H1 (cell line): ENCODE measurements at regions of chr19 and their contacts with region 1.

Region 1: DNA sequence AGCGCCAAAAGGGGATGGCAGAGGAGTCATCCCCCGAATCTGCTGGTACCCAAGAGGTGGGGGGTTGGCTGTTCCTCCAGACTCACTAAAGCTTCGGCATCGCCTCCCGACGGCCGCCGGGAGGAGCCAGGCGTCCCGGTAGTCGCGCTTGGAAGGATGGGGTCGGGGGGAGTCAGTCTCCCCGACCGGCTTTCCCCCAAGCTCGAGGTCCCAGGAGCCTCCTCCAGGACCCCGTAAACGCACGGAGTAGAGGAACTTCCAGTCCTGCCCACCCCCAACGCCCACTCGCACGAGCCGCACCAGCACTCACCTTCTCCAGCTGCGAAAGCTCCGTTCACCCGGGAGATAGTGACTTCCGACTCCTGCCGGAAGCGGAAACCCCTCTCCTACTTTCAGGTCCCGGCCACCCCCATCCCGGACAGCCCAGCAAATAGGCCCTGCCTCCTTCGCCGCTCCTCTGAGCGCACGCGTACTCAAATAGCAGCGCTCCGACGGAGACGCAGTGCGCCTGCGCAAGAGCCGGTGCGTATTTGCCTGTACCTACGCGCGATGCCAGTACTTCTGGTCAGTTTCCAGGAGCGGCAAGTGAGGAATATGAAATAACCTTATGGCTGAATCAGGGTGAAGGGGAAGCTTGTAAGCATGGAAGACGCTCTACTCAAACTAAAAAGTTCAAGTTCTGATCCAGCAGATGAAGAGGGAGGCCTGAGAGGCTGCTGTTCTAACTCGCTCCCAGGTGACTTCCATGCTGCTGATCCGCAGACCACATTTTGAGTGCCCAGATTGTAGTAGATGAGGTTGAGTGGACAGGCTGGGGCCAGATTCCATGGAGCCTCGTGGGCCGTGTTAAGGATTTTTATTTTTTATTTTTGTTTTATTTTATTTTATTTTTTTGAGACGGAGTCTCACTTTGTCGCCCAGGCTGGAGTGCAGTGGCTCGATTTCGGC is at the start of gene ELOF1:
- DNase-seq: peak; percentile 95
- H3K4me3 ChIP-seq: peak within 1 kb of the TSS; percentile 82 to 95 (median 90)
- H3K27ac ChIP-seq: peak within 1 kb of the TSS; percentile 1; the same call in 1 of the 2 replicates
- H3K4me1 ChIP-seq: peaks cover 0 to 3% (median 0%) of the 10 kb centered on the region in 4 experiments; a peak in 4 of 7 replicates
- H3K27me3 ChIP-seq: no peaks in the 10 kb centered on the region
- CTCF ChIP-seq: peak in 1 of 3 experiments; percentile 17; a peak in 1 of 4 replicates
- EP300 ChIP-seq: no peak
- POLR2A ChIP-seq: peak in 1 of 2 experiments; percentile 79; a peak in 2 of 3 replicates
- RAD21 ChIP-seq: 0 out of 4 replicates have a peak, but pooled peaks have one; percentile 4 to 5
- total RNA-seq, gene ELOF1: 84.2 and 88.4 TPM in 2 replicates

Region 2: DNA sequence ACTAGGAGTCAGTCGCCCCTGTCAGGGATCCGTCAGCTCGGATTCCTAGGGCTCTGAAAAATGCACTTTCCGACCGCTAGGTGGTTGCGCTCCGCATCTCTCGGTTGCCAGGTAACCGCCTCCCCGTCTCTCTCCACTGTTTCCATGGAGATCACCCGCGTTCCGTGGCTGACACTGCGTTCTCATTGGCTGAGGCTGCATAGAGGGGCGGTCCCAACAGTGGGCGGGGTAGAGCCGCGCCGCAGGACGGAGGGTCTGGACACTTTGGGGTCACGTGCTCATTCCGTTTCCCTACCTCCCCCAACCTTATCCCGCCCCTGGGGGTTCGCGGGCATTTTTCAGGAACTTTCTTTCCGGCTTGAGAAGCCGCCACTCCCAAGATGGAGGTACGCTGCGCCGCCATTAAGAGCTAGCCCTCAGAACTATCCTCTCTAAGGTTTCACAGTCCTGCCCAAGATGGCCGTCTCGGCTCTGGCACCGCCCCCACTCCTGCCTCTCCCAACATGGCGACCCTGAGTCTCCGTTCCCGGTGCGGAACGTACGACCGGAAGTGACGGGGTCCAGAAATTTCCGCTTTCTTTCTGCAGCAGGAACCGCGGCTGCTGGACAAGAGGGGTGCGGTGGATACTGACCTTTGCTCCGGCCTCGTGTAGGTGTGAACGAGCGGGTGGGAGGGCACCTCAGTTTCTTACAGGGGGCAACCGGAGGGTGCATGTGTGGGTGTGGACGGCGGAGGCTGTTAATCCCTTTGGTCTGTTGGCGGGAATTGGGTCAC is 123.9 kb before region 1 on chr19 and contains the starts of genes ODAD3 and PRKCSH:
- CTCF ChIA-PET with region 1: no interaction called
- POLR2A ChIA-PET with region 1: no interaction called
- DNase-seq: peak; percentile 98 to 99
- H3K4me3 ChIP-seq: peak within 1 kb of the TSS; percentile 86 to 99 (median 93)
- H3K27ac ChIP-seq: peak within 1 kb of the TSS; percentile 91
- H3K4me1 ChIP-seq: peaks cover 0 to 13% (median 7%) of the 10 kb centered on the region in 4 experiments; a peak in 5 of 7 replicates
- H3K27me3 ChIP-seq: no peaks in the 10 kb centered on the region
- CTCF ChIP-seq: peak; percentile 84 to 95 (median 86)
- EP300 ChIP-seq: peak in 1 of 2 experiments; percentile 51; a peak in 1 of 3 replicates
- POLR2A ChIP-seq: peak in 1 of 2 experiments; percentile 88; a peak in 2 of 3 replicates
- RAD21 ChIP-seq: peak; percentile 27 to 34; a peak in 2 of 4 replicates
- total RNA-seq, gene ODAD3: 1.6 and 2.2 TPM in 2 replicates
- total RNA-seq, gene PRKCSH: 337 and 341 TPM in 2 replicates

Region 3: DNA sequence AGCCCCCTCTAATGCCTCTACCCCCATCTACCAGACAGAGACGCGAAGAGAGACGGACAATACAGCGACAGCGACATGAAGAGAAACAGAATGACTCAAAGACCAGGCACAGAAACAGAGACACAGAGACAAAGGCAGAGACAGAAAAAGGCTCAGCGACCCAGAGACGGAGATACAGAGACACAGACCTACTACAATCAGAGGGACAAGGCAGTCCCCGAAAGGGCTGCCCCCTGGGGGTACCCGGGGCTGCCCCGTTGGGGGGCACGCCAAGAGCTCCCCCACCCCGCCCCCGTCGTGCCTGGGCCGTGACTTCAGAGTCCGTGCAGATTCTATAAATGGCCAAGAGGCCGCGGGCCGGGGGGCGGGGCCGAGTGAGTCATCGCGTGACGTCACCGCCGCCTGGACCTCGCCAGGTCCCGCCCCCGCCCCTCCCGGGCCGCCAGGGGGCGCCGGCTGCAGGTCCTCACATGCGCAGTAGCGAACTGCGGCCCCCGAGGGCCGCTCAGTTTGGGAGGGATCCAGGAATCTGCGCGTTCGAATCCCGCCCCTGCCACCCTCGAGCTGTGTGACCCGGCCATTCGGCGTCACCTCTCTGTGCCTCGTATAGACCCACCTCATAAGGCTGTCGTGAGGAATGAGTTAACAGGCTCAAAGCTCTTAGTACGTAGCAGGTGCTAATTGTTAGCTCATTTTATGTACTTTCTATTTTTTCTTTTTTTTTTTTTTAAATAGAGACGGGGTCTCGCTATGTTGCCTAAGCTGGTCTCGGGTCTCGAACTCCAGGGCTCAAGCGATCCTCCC is 23.2 kb before region 1 on chr19:
- CTCF ChIA-PET with region 1: interaction called, 8 read pairs
- POLR2A ChIA-PET with region 1: interaction called, 10 read pairs
- DNase-seq: peak; percentile 71 to 98
- H3K4me3 ChIP-seq: peak overlapping the region; percentile 36 to 63 (median 40)
- H3K27ac ChIP-seq: peak overlapping the region; percentile 46; the same call in 1 of the 2 replicates
- H3K4me1 ChIP-seq: peaks cover 4 to 20% (median 18%) of the 10 kb centered on the region in 4 experiments
- H3K27me3 ChIP-seq: no peaks in the 10 kb centered on the region; a peak in 1 of 7 replicates
- CTCF ChIP-seq: peak; percentile 75 to 86 (median 79)
- EP300 ChIP-seq: no peak
- POLR2A ChIP-seq: peak in 1 of 2 experiments; percentile 80; a peak in 1 of 3 replicates
- RAD21 ChIP-seq: peak in 1 of 2 experiments; percentile 47; a peak in 1 of 4 replicates

Region 4: GRCh38 chr19:11570039-11570462 is 10.9 kb after region 1 on chr19:
- CTCF ChIA-PET with region 1: interaction called, 19 read pairs
- POLR2A ChIA-PET with region 1: interaction called, 9 read pairs
- DNase-seq: no peak
- H3K4me3 ChIP-seq: no peak overlapping the region
- H3K27ac ChIP-seq: no peak overlapping the region
- H3K4me1 ChIP-seq: no peaks in the 10 kb centered on the region
- H3K27me3 ChIP-seq: no peaks in the 10 kb centered on the region
- CTCF ChIP-seq: no peak
- EP300 ChIP-seq: no peak
- POLR2A ChIP-seq: no peak
- RAD21 ChIP-seq: no peak

Region 5: DNA sequence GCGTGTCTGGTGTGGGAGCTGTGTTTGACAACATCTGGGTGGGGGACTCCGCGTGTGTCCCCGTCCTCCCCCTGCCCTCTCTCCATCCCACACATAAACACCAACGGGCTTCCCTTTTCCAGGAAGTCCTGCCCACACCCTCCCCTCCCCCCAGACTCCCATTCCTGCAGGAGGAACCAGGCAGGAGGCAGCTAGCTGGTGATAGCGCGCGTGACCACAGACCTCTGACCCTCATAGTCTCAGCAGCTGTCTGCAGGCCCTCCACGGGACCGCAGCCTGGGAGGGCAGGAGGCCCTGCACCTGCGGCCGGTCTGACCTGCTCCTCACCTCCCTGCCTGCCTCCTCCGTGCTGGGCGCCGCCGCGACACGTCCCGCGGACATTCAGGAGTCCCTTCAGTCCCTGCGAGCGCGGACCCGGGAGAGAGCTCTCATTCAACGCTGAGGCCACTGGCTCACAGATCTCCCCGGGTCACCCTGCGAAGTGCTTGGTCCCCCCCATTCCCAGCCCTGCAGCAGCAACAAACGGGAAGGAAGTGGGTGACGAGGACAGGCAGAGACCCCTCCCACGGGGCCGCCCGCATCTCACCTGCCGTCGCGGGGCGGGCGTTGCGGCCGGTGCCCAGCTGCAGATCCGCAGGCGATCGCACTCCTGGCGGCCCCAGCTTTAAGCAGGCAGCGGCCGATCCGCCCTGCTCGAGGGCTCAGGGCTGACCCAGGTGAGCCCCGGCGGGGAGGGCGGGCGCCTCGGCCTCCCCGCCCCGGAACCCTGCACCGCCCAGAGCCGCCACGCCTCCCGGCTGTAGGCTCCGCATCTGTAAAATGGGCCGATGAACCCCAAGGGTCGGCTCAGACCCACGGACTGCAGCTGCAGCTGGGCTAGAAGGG is 19.3 kb after region 1 on chr19:
- CTCF ChIA-PET with region 1: interaction called, 24 read pairs
- POLR2A ChIA-PET with region 1: interaction called, 8 read pairs
- DNase-seq: peak in 1 of 2 experiments; percentile 73
- H3K4me3 ChIP-seq: peak overlapping the region; percentile 30 to 66 (median 64)
- H3K27ac ChIP-seq: no peak overlapping the region
- H3K4me1 ChIP-seq: peaks cover 0 to 10% (median 6%) of the 10 kb centered on the region in 4 experiments; a peak in 4 of 7 replicates
- H3K27me3 ChIP-seq: peaks cover 0 to 10% (median 6%) of the 10 kb centered on the region in 4 experiments; a peak in 5 of 7 replicates
- CTCF ChIP-seq: no peak
- EP300 ChIP-seq: peak in 1 of 2 experiments; percentile 71; a peak in 1 of 3 replicates
- POLR2A ChIP-seq: peak in 1 of 2 experiments; percentile 36; a peak in 1 of 3 replicates
- RAD21 ChIP-seq: no peak

Region 6: GRCh38 chr19:11587302-11587974 is 28.3 kb after region 1 on chr19:
- CTCF ChIA-PET with region 1: interaction called, 19 read pairs
- POLR2A ChIA-PET with region 1: interaction called, 5 read pairs
- DNase-seq: peak; percentile 33 to 97
- H3K4me3 ChIP-seq: no peak overlapping the region
- H3K27ac ChIP-seq: no peak overlapping the region
- H3K4me1 ChIP-seq: no peaks in the 10 kb centered on the region
- H3K27me3 ChIP-seq: no peaks in the 10 kb centered on the region; a peak in 1 of 7 replicates
- CTCF ChIP-seq: peak; percentile 87 to 90 (median 89)
- EP300 ChIP-seq: no peak
- POLR2A ChIP-seq: no peak
- RAD21 ChIP-seq: peak; percentile 87 to 89

Region 7: GRCh38 chr19:11766597-11767591 is 207.7 kb after region 1 on chr19 and contains the start of gene ZNF441:
- CTCF ChIA-PET with region 1: no interaction called
- POLR2A ChIA-PET with region 1: no interaction called
- DNase-seq: peak; percentile 46 to 96
- H3K4me3 ChIP-seq: peak within 1 kb of the TSS; percentile 48 to 84 (median 78)
- H3K27ac ChIP-seq: no peak within 1 kb of the TSS
- H3K4me1 ChIP-seq: no peaks in the 10 kb centered on the region
- H3K27me3 ChIP-seq: peaks cover 3 to 20% (median 15%) of the 10 kb centered on the region in 4 experiments
- CTCF ChIP-seq: no peak; a peak in 1 of 4 replicates
- EP300 ChIP-seq: no peak
- POLR2A ChIP-seq: peak; percentile 27 to 62; a peak in 2 of 3 replicates
- RAD21 ChIP-seq: no peak
- total RNA-seq, gene ZNF441: 0.23 and 0.48 TPM in 2 replicates